ENCODE measurements at regions of chr1 and their contacts with region 1.

Region 1: GRCh38 chr1:207963427-207964194 is 52.7 kb upstream of the CD34 start:
- DNase-seq: peak; percentile 79 to 85
- ATAC-seq: peak; percentile 92 to 94
- H3K4me3 ChIP-seq: peak overlapping the region; percentile 69
- H3K27ac ChIP-seq: peak overlapping the region; percentile 91 to 96
- H3K4me1 ChIP-seq: peaks cover 8% of the 10 kb centered on the region; the same call in 2 of the 3 replicates
- CTCF ChIP-seq: peak; percentile 98
- EP300 ChIP-seq: no peak
- POLR2A ChIP-seq: peak; percentile 84
- RAD21 ChIP-seq: peak; percentile 87 to 99

Region 2: GRCh38 chr1:207797229-207797961 is 166.2 kb before region 1 on chr1:
- CTCF ChIA-PET with region 1: interaction called, 10 read pairs
- POLR2A ChIA-PET with region 1: no interaction called
- DNase-seq: peak; percentile 77 to 82
- ATAC-seq: peak; percentile 94
- H3K4me3 ChIP-seq: no peak overlapping the region
- H3K27ac ChIP-seq: peak overlapping the region; percentile 4 to 68; a peak in 4 of 6 replicates
- H3K4me1 ChIP-seq: peaks cover 8% of the 10 kb centered on the region
- CTCF ChIP-seq: peak; percentile 84
- EP300 ChIP-seq: no peak
- POLR2A ChIP-seq: no peak
- RAD21 ChIP-seq: peak; percentile 71 to 80

Region 3: DNA sequence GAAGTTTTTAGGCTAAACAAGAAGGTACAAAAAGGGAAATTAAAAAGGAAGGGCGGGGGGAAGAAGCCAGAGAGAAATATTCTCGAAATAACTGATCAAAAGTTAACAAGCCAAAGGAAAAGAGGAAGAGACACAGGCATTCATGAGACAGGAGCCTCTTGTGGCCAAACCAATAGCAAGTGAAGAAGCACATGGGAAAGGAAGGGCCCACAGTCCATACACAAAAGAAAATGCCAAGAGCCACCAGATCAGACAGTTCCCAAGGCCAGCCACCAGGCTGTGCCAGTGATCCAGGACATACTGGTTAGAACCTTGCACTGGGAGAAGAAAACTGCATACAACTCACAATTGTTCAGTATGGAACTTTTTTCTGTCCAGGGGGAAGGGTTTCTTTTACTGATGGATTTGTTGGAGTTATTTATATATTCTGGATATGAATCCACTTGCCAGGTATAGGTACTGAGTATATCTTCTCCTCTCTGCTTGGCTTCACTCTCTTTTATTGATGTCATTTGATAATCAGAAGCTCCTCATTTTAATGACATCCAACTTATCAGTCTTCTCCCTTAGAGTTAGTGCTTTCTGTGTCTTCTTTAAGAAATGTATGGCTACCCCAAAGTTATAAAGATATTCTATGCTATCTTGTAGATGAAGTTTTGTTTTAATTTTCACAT is 135.0 kb before region 1 on chr1:
- CTCF ChIA-PET with region 1: interaction called, 20 read pairs
- POLR2A ChIA-PET with region 1: interaction called, 3 read pairs
- DNase-seq: peak; percentile 86 to 90
- ATAC-seq: peak; percentile 69 to 81
- H3K4me3 ChIP-seq: no peak overlapping the region
- H3K27ac ChIP-seq: peak overlapping the region; percentile 32 to 43; a peak in 4 of 6 replicates
- H3K4me1 ChIP-seq: peaks cover 45% of the 10 kb centered on the region
- CTCF ChIP-seq: peak; percentile 74
- EP300 ChIP-seq: no peak
- POLR2A ChIP-seq: no peak
- RAD21 ChIP-seq: peak; percentile 77 to 80

Region 4: GRCh38 chr1:207885129-207886032 is 78.2 kb before region 1 on chr1:
- CTCF ChIA-PET with region 1: interaction called, 112 read pairs
- POLR2A ChIA-PET with region 1: interaction called, 12 read pairs
- DNase-seq: peak; percentile 81 to 85
- ATAC-seq: peak; percentile 90 to 99
- H3K4me3 ChIP-seq: no peak overlapping the region
- H3K27ac ChIP-seq: no peak overlapping the region
- H3K4me1 ChIP-seq: peaks cover 7% of the 10 kb centered on the region; the same call in 2 of the 3 replicates
- CTCF ChIP-seq: peak; percentile 87
- EP300 ChIP-seq: no peak
- POLR2A ChIP-seq: no peak
- RAD21 ChIP-seq: peak; percentile 82 to 85

Region 5: DNA sequence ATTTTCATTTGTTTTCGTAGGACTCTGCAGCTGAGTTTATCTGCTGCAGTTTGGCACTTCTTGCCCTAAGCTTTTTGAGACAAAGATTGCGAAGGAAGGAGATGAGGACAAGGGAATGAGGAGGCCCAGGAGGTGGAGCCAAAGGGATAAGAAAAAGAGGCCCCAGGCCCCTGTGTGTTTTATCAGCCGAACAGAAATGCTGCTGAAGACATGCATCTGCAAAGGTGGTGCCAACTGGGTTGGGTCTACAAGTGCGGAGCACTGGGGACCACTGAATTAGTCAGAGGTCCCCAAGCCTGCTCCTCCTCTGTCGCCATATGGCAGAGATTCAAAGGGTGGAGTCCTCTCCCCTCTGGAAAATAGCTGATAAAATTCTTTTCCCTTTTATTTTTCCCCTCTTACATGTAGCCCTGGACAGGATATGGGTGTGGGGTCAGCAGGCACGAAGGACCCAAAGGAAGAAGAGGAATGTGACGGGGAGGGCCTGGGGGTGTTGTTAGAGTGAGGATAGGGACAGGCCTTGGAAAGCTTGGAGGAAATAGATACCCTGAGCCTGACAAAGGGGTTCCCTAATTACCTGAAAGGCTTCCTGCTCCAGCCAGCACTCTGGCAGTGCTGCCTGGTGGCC is 55.4 kb before region 1 on chr1:
- CTCF ChIA-PET with region 1: interaction called, 20 read pairs
- POLR2A ChIA-PET with region 1: interaction called, 3 read pairs
- DNase-seq: no peak
- ATAC-seq: no peak
- H3K4me3 ChIP-seq: no peak overlapping the region
- H3K27ac ChIP-seq: no peak overlapping the region
- H3K4me1 ChIP-seq: 0 out of 3 replicates have a peak, but pooled peaks cover 4% of the 10 kb centered on the region
- CTCF ChIP-seq: no peak
- EP300 ChIP-seq: no peak
- POLR2A ChIP-seq: no peak
- RAD21 ChIP-seq: no peak

Region 6: GRCh38 chr1:207938016-207938415 is 25.6 kb before region 1 on chr1:
- CTCF ChIA-PET with region 1: interaction called, 12 read pairs
- POLR2A ChIA-PET with region 1: no interaction called
- DNase-seq: peak in 1 of 2 experiments; percentile 78
- ATAC-seq: peak; percentile 91 to 97
- H3K4me3 ChIP-seq: no peak overlapping the region
- H3K27ac ChIP-seq: no peak overlapping the region
- H3K4me1 ChIP-seq: no peaks in the 10 kb centered on the region
- CTCF ChIP-seq: no peak
- EP300 ChIP-seq: no peak
- POLR2A ChIP-seq: no peak
- RAD21 ChIP-seq: no peak

Region 7: GRCh38 chr1:207973898-207974568 is 10.4 kb after region 1 on chr1:
- CTCF ChIA-PET with region 1: interaction called, 13 read pairs
- POLR2A ChIA-PET with region 1: no interaction called
- DNase-seq: no peak
- ATAC-seq: no peak
- H3K4me3 ChIP-seq: no peak overlapping the region
- H3K27ac ChIP-seq: no peak overlapping the region
- H3K4me1 ChIP-seq: no peaks in the 10 kb centered on the region
- CTCF ChIP-seq: no peak
- EP300 ChIP-seq: no peak
- POLR2A ChIP-seq: no peak
- RAD21 ChIP-seq: no peak

Region 8: DNA sequence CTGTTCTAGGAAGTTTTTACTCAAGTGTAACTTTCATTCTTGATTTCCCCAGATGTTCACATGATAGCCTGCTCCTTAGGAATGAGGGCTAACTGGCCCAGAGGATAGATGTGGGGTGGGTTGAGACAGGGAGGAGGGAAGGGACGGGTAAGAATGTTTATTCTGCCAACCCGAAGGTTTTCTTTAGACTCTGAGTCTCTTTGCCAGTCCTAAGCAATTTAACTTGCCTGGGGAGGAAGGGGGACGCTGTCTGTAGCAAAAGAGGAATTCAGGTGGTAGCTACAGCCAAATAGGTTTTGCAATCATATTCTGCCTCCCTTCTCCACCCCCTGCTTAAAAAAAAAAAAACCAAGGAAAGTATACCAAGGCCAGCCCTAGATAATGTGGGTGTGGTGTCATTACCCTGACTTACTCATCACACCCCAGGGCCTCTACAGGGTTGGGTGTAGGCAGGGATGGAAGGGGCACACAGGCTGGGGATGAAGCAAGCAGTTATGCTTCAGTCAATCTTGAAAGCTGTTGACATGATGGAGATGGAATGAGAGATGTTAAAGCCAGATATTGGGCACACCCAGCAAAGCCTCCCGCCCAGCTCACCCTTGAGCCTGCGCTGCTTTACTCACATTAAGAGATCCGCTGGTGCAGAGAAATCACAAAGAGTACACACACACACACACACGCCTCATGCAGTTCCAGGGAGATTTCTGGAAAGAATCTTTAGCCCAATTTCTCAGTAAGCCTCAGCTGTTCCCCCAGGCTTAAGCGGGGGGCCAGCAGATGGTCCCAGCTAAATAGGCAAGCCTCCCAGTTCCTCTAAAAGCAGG is 220.7 kb after region 1 on chr1:
- CTCF ChIA-PET with region 1: no interaction called
- POLR2A ChIA-PET with region 1: no interaction called
- DNase-seq: peak; percentile 92 to 95
- ATAC-seq: peak; percentile 96 to 98
- H3K4me3 ChIP-seq: no peak overlapping the region
- H3K27ac ChIP-seq: peak overlapping the region; percentile 66 to 81
- H3K4me1 ChIP-seq: peaks cover 60% of the 10 kb centered on the region
- CTCF ChIP-seq: no peak
- EP300 ChIP-seq: peak; percentile 69 to 79; a peak in 3 of 5 replicates
- POLR2A ChIP-seq: no peak
- RAD21 ChIP-seq: peak in 1 of 2 experiments; percentile 14; a peak in 3 of 5 replicates

Measured in A549 (cell line).